Ovary (tissue), 10 donors: ENCODE measurements at regions of chr11 and their contacts with region 1.

Region 1: DNA sequence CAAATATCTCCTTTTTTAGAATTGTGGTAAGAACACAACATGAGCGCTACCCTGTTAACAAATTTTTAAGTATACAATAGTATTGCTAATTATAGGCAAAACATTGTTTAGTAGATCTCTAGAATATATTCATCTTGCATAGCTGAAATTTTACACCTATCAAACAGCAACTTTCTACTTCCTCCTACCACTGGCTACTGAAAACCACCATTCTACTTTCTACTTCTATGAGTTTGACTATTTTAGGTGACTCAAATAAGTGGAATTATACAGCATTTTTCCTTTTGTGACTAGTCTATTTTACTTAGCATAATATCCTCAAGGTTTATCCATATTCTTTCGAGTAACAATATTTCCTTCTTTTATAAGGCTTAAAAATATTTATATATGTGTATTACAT is 128.4 kb downstream of the FAM76B start:
- DNase-seq: no peak
- H3K4me3 ChIP-seq: no peak overlapping the region
- H3K27ac ChIP-seq: no peak overlapping the region
- H3K4me1 ChIP-seq: no peaks in the 10 kb centered on the region
- H3K27me3 ChIP-seq: no peaks in the 10 kb centered on the region
- CTCF ChIP-seq: no peak
- EP300 ChIP-seq: no peak
- POLR2A ChIP-seq: no peak

Region 2: GRCh38 chr11:95262994-95263765 is 398.0 kb before region 1 on chr11:
- intact Hi-C with region 1: loop called in 1 of 4 experiments (anchors 5 kb)
- DNase-seq: no peak
- H3K4me3 ChIP-seq: no peak overlapping the region
- H3K27ac ChIP-seq: no peak overlapping the region
- H3K4me1 ChIP-seq: no peaks in the 10 kb centered on the region
- H3K27me3 ChIP-seq: no peaks in the 10 kb centered on the region
- CTCF ChIP-seq: no peak
- EP300 ChIP-seq: no peak
- POLR2A ChIP-seq: no peak